CD8-positive, alpha-beta T cell (primary cell): ENCODE measurements at regions of chr19 and their contacts with region 1.

Region 1: DNA sequence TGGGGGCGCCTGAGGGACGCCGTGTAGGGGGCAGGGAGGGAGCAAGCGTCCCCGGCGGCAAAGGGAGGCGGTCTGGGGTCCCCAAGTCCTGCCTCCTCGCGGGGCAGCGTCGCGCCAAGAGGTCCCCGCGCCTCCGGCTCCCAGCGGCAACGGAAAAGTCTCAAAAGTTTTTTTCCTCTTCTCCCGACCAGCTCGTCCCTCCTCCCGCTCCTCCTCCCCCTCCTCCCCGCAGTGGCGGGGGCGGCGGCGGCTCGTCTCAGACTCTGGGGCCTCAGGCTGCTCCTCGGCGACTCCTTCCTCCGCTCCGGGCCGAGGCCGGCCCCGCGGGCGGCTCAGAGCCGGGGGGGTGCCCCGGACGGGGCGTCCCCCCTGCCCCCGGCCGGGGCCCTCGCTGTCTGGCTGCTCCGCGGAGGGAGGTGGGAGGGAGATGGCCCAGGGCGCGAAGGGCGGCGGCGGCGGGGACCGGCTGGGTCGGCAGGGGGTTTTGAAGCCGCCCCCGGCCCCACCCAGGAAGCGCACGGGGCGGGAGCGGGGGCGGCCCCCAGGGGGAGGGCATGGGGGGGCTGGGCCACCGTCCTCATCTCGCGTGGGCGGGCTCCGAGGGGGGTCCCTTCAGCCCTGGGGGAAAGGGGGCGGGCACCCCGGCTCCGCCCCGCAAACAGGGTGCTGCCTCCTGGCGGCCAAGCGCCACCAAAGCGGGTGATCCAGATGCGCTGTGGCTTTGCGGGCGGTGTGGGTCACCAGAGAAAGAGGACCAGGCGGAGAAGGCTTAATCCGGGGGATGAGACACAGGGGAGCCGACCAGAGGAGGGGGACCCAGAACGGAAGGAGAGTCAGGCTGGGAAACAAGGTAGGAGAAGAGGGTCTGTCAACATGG is at the start of gene TGFB1:
- DNase-seq: peak; percentile 91 to 98 (median 96)
- ATAC-seq: peak; percentile 69
- H3K4me3 ChIP-seq: peak within 1 kb of the TSS; percentile 74 to 79
- H3K4me3 Mint-ChIP-seq: peak within 1 kb of the TSS; percentile 95
- H3K27ac ChIP-seq: peak within 1 kb of the TSS; percentile 76 to 82
- H3K27ac Mint-ChIP-seq: peak within 1 kb of the TSS; percentile 96
- H3K4me1 ChIP-seq: peaks cover 69% of the 10 kb centered on the region
- H3K4me1 Mint-ChIP-seq: peaks cover 60% of the 10 kb centered on the region
- H3K27me3 ChIP-seq: no peaks in the 10 kb centered on the region
- H3K27me3 Mint-ChIP-seq: no peaks in the 10 kb centered on the region
- CTCF ChIP-seq: peak; percentile 85
- total RNA-seq, gene TGFB1: 652 to 710 TPM

Region 2: GRCh38 chr19:40716655-40717324 is 636.9 kb before region 1 on chr19 and contains the starts of genes COQ8B and ITPKC:
- CTCF ChIA-PET with region 1: no interaction called
- POLR2A ChIA-PET with region 1: no interaction called
- intact Hi-C with region 1: loop called (anchors 5 kb)
- DNase-seq: peak; percentile 98 to 100 (median 100)
- ATAC-seq: peak; percentile 74
- H3K4me3 ChIP-seq: peak within 1 kb of the TSS; percentile 66 to 93
- H3K4me3 Mint-ChIP-seq: peak within 1 kb of the TSS; percentile 88
- H3K27ac ChIP-seq: peak within 1 kb of the TSS; percentile 88 to 89
- H3K27ac Mint-ChIP-seq: peak within 1 kb of the TSS; percentile 97
- H3K4me1 ChIP-seq: peaks cover 61% of the 10 kb centered on the region
- H3K4me1 Mint-ChIP-seq: peaks cover 70% of the 10 kb centered on the region
- H3K27me3 ChIP-seq: no peaks in the 10 kb centered on the region
- H3K27me3 Mint-ChIP-seq: no peaks in the 10 kb centered on the region
- CTCF ChIP-seq: no peak
- total RNA-seq, gene COQ8B: 14.0 to 14.2 TPM
- total RNA-seq, gene ITPKC: 5.9 to 6.4 TPM

Region 3: GRCh38 chr19:41206926-41207750 is 146.6 kb before region 1 on chr19:
- CTCF ChIA-PET with region 1: interaction called, 5 read pairs
- POLR2A ChIA-PET with region 1: interaction called, 6 read pairs
- intact Hi-C with region 1: loop called in 1 of 2 experiments (anchors 1 kb)
- DNase-seq: no peak
- ATAC-seq: no peak
- H3K4me3 ChIP-seq: no peak overlapping the region
- H3K4me3 Mint-ChIP-seq: no peak overlapping the region
- H3K27ac ChIP-seq: no peak overlapping the region
- H3K27ac Mint-ChIP-seq: no peak overlapping the region
- H3K4me1 ChIP-seq: no peaks in the 10 kb centered on the region
- H3K4me1 Mint-ChIP-seq: peaks cover 6% of the 10 kb centered on the region
- H3K27me3 ChIP-seq: no peaks in the 10 kb centered on the region
- H3K27me3 Mint-ChIP-seq: no peaks in the 10 kb centered on the region
- CTCF ChIP-seq: no peak

Region 4: GRCh38 chr19:41321600-41322270 is 32.0 kb before region 1 on chr19:
- CTCF ChIA-PET with region 1: interaction called, 19 read pairs
- POLR2A ChIA-PET with region 1: interaction called, 25 read pairs
- intact Hi-C with region 1: no loop called
- DNase-seq: peak in 3 of 9 experiments; percentile 27 to 60 (median 47)
- ATAC-seq: no peak
- H3K4me3 ChIP-seq: no peak overlapping the region
- H3K4me3 Mint-ChIP-seq: no peak overlapping the region
- H3K27ac ChIP-seq: peak overlapping the region in 1 of 2 experiments; percentile 63
- H3K27ac Mint-ChIP-seq: peak overlapping the region; percentile 85
- H3K4me1 ChIP-seq: peaks cover 32% of the 10 kb centered on the region
- H3K4me1 Mint-ChIP-seq: peaks cover 44% of the 10 kb centered on the region
- H3K27me3 ChIP-seq: no peaks in the 10 kb centered on the region
- H3K27me3 Mint-ChIP-seq: no peaks in the 10 kb centered on the region
- CTCF ChIP-seq: no peak

Region 5: DNA sequence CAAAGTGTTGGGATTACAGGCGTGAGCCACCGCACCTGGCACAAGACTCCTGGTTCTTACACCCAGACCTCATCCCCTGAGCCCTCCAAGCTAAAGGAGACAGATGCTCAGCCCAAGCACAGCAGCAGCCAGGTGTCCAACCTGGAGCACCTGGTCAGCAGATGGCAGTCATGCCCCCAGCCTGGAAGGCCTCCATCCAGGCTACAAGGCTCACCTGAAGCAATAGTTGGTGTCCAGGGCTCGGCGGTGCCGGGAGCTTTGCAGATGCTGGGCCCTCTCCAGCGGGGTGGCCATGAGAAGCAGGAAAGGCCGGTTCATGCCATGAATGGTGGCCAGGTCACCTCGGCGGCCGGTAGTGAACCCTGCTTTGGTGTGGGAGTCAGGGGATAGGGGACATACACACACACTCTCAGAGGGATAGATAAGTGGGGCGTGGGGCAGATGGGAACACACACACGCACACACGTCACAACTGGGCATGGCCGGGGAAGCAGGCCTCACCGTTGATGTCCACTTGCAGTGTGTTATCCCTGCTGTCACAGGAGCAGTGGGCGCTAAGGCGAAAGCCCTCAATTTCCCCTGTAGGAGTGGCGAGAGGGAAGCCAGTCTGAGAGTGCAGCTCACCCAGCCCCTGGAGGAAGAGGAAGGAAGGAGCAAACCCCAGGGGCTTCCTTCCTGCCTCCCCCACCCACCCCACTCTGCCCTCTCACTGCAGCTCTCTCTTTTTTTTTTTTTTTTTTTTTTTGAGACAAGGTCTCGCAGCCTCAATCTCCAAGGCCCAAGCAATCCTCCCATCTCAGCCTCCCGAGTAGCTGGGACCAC is 11.8 kb before region 1 on chr19:
- CTCF ChIA-PET with region 1: interaction called, 11 read pairs
- POLR2A ChIA-PET with region 1: interaction called, 3 read pairs
- intact Hi-C with region 1: loop called in 1 of 2 experiments (anchors 1 kb)
- DNase-seq: peak in 4 of 9 experiments; percentile 24 to 62 (median 38)
- ATAC-seq: peak; percentile 39
- H3K4me3 ChIP-seq: no peak overlapping the region
- H3K4me3 Mint-ChIP-seq: peak overlapping the region; percentile 53
- H3K27ac ChIP-seq: peak overlapping the region in 1 of 2 experiments; percentile 40
- H3K27ac Mint-ChIP-seq: peak overlapping the region; percentile 41
- H3K4me1 ChIP-seq: peaks cover 38% of the 10 kb centered on the region
- H3K4me1 Mint-ChIP-seq: peaks cover 53% of the 10 kb centered on the region
- H3K27me3 ChIP-seq: no peaks in the 10 kb centered on the region
- H3K27me3 Mint-ChIP-seq: no peaks in the 10 kb centered on the region
- CTCF ChIP-seq: no peak

Region 6: DNA sequence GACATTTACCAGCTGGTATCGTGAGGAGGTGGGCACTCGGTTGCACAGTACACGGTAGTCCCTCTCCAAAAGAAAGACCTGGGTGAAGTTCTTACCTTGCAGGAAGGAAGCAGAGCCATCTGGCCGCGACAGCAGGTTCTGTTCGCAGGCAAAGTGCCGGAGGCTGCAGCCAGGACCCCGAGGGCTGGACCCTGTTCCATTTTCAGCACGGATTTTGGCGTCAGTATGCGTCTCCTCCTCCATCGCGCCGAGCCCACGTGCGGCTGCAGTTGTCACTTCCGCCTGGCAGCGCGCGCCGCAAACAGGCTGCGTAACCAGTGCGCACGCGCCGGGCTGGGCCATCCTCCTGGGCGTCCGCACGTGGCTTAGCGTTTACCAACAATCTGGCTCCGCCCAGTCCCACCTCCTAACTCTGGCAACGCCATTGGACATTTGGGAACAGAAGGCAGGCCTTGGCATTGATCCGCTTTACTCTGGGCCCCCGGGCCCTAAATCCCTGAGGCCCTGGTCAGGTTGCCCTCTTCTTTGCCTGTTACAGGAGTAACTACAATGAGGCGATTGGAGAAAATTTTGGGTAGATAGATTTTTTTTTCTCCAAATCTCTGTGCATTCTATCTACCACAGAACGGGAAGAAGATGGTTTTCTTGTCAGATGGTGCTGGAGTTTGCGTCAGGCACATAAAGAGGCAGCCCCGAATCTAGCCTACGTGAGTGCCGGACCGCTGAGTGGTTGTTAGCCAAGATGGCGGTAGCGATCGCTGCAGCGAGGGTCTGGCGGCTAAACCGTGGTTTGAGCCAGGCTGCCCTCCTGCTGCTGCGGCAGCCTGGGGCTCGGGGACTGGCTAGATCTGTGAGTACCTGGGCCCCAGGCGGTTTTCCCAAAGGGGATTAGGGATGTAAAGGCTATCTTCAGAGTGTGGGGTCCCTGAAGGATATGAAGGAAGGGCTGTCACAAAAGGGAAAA is 43.7 kb after region 1 on chr19 and contains the starts of genes BCKDHA and EXOSC5:
- CTCF ChIA-PET with region 1: no interaction called
- POLR2A ChIA-PET with region 1: interaction called, 3 read pairs
- intact Hi-C with region 1: loop called (anchors 1 kb)
- DNase-seq: peak; percentile 97 to 100 (median 99)
- ATAC-seq: peak; percentile 97
- H3K4me3 ChIP-seq: peak within 1 kb of the TSS; percentile 84 to 97
- H3K4me3 Mint-ChIP-seq: peak within 1 kb of the TSS; percentile 98
- H3K27ac ChIP-seq: peak within 1 kb of the TSS; percentile 98
- H3K27ac Mint-ChIP-seq: peak within 1 kb of the TSS; percentile 100
- H3K4me1 ChIP-seq: peaks cover 28% of the 10 kb centered on the region
- H3K4me1 Mint-ChIP-seq: peaks cover 47% of the 10 kb centered on the region
- H3K27me3 ChIP-seq: no peaks in the 10 kb centered on the region
- H3K27me3 Mint-ChIP-seq: no peaks in the 10 kb centered on the region
- CTCF ChIP-seq: no peak
- total RNA-seq, gene BCKDHA: 19.4 to 20.5 TPM
- total RNA-seq, gene EXOSC5: 4.1 to 5.5 TPM

Region 7: GRCh38 chr19:41457241-41457640 is 103.5 kb after region 1 on chr19:
- CTCF ChIA-PET with region 1: no interaction called
- POLR2A ChIA-PET with region 1: no interaction called
- intact Hi-C with region 1: no loop called
- DNase-seq: peak in 2 of 9 experiments; percentile 34 to 47
- ATAC-seq: peak; percentile 44
- H3K4me3 ChIP-seq: no peak overlapping the region
- H3K4me3 Mint-ChIP-seq: no peak overlapping the region
- H3K27ac ChIP-seq: no peak overlapping the region
- H3K27ac Mint-ChIP-seq: no peak overlapping the region
- H3K4me1 ChIP-seq: peaks cover 16% of the 10 kb centered on the region
- H3K4me1 Mint-ChIP-seq: peaks cover 9% of the 10 kb centered on the region
- H3K27me3 ChIP-seq: no peaks in the 10 kb centered on the region
- H3K27me3 Mint-ChIP-seq: peaks cover 26% of the 10 kb centered on the region
- CTCF ChIP-seq: no peak